Dendritic cell treated with granulocyte-macrophage colony-stimulating factor and Interleukin-4, amounts not matched to agents 40 ng/mL and 50 ng/mL, for 4 days (primary cell): ENCODE measurements at regions of chr19 and their contacts with region 1.

Region 1: DNA sequence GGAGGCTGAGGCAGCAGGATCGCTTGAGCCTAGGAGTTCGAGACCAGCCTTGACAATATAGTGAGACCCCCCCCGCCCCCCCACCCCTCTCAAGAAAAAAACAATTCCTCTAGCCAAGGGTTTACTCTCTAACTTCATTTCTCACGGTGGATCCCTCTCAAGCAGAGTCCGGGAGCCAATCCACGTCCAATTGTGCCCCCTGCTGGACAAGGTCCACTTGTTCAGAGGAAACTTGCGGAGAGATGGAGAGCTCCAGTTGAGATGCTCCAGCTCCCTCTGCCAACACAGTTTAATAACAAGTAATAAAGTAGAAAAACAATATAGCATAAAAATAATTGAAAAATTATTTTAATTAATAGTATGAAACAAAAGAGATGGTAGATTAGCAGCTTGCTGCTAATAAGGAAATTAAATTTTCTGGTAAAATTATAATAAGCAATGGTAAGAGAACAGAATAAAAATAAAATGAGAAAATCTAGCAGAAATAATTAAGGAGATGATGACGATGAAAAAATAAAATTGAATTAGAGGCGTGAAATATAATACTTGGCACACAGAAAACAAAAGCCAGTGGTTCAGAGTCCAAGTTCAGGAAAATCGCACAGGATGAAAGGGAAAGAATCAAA is 14.5 kb upstream of the SIGLEC14 start:
- H3K4me3 Mint-ChIP-seq: no peak overlapping the region
- H3K27ac Mint-ChIP-seq: no peak overlapping the region
- H3K4me1 Mint-ChIP-seq: peaks cover 36% of the 10 kb centered on the region
- H3K27me3 Mint-ChIP-seq: peaks cover 51% of the 10 kb centered on the region

Region 2: DNA sequence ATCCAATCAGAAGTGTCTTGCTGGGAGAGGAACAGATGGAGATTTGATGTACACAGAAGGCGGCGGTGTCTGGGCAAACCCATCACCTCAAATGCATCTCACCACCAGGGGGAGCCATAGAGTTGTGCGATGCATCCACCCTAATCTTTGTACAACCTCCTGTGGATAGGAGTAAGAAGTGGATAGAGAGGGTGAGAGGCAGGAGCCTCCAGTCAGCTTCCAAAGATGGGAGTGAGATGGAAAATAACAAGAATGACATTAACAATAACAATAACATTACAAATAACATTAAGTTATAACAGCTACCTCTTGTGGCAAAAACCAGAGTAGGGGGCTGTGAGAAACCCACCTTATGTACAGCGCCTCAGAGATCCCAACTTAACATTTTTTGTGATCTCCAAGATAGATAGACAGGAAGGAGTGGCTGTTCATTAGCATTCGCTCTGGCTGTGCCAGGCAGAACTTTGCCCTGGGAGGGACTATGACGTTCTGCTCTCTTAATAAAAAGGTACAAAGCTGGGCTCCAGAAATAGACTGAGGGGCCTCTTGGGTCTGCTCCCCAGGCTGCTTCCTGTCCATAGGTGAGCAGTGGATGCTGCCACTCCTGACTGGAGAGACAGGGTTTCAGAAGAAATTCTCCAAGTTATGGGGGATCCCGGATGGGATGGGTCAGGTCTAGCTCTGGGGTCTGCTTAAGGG is 187.9 kb before region 1 on chr19:
- intact Hi-C with region 1: loop called (anchors 1 kb)
- H3K4me3 Mint-ChIP-seq: no peak overlapping the region
- H3K27ac Mint-ChIP-seq: no peak overlapping the region
- H3K4me1 Mint-ChIP-seq: peaks cover 23% of the 10 kb centered on the region
- H3K27me3 Mint-ChIP-seq: peaks cover 20% of the 10 kb centered on the region

Region 3: GRCh38 chr19:51777570-51778462 is 116.7 kb after region 1 on chr19:
- intact Hi-C with region 1: loop called (anchors 5 kb)
- H3K4me3 Mint-ChIP-seq: no peak overlapping the region
- H3K27ac Mint-ChIP-seq: peak overlapping the region; percentile 39
- H3K4me1 Mint-ChIP-seq: peaks cover 70% of the 10 kb centered on the region
- H3K27me3 Mint-ChIP-seq: peaks cover 9% of the 10 kb centered on the region